Naive thymus-derived CD8-positive, alpha-beta T cell (primary cell): ENCODE measurements at regions of chr16 and their contacts with region 1.

Region 1: GRCh38 chr16:30378236-30379204 is 3.8 kb downstream of the SEPTIN1 start:
- DNase-seq: peak; percentile 76 to 100 (median 99)
- ATAC-seq: peak; percentile 74 to 79
- H3K4me3 Mint-ChIP-seq: peak overlapping the region; percentile 95 to 100 (median 98)
- H3K27ac Mint-ChIP-seq: peak overlapping the region; percentile 99 to 100 (median 100)
- H3K4me1 Mint-ChIP-seq: peaks cover 29 to 71% (median 68%) of the 10 kb centered on the region in 4 donors
- H3K27me3 Mint-ChIP-seq: no peaks in the 10 kb centered on the region

Region 2: DNA sequence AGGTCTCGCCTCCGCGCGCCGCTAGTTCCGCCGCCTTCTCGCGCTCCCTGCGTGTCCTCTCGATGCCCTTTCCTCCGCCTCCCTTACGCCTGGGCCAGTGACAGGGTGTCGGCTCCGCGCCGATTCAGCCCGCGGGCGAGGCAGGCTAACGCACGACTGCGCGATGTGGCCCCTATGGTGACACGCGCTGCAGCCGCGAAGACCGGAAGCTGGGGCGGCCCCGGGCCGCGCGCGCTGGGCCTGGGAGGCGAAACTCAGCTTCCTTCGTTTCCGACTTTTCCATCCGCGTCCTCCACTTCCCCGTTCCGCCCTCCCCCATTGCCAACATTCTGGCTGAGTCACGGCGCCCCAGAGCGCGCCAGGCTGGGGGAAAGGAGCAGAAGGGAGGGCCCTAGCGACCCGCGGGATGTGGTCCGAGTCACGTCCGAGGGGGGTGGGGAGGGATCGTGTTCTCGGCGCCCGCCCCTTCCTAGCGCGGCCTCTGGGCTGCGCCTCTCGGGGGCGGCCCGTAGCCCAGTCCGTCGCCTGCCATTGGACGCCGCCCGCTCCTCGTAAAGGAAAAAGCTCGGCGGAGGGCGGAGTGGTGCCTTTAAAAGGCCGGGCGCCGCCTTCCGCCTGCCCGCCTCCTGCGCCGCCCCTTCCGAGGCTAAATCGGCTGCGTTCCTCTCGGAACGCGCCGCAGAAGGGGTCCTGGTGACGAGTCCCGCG is 313.2 kb before region 1 on chr16 and contains the start of gene ALDOA:
- POLR2A ChIA-PET with region 1: interaction called, 15 read pairs
- DNase-seq: peak; percentile 89 to 96 (median 92)
- ATAC-seq: peak; percentile 81 to 87
- H3K4me3 Mint-ChIP-seq: peak within 1 kb of the TSS; percentile 98 to 100 (median 99)
- H3K27ac Mint-ChIP-seq: peak within 1 kb of the TSS; percentile 94 to 99 (median 97)
- H3K4me1 Mint-ChIP-seq: peaks cover 17 to 46% (median 43%) of the 10 kb centered on the region in 4 donors
- H3K27me3 Mint-ChIP-seq: no peaks in the 10 kb centered on the region
- polyA plus RNA-seq, gene ALDOA: 798 to 1,176 (median 994) TPM

Region 3: DNA sequence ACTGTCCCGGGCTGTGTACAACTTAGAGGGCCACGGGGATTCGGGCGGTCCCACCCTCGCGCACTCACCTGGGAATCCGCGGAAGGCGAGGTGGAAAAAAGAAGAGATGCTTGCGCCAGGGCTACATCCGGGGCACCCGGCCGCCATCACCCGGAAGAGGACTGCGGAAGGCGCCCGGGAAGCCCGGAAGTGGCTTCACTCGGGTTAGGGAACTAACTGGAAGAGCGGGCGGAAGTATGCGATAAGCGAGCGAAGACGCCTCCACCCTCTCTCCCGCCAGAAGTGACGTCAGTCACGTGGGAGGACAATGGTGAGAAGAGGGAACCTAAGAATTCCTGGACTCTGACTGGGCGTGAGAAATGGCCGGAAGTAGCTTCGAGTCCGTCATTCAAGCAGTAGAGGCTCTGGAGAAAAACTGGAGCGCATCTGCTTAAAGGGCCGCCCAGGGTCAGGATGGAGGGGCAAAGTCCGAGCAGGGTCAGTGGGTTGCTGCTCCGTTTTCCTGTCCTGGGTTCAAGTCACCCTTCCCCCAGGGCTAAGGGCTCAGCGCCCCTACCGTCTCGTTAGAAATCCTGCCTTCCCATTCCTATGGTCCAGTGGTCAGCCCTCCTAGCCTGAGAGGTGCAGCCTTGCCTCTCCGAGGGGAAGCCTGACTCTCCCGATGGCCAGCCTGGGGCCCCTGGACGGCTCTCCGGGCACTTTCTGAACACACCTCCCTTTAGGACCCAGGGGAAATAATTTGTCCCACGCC is 23.2 kb before region 1 on chr16 and contains the start of gene CD2BP2:
- POLR2A ChIA-PET with region 1: interaction called, 17 read pairs
- DNase-seq: peak; percentile 79 to 93 (median 84)
- ATAC-seq: peak; percentile 92 to 94
- H3K4me3 Mint-ChIP-seq: peak within 1 kb of the TSS; percentile 89 to 99 (median 95)
- H3K27ac Mint-ChIP-seq: peak within 1 kb of the TSS; percentile 95 to 99 (median 98)
- H3K4me1 Mint-ChIP-seq: peaks cover 22 to 47% (median 37%) of the 10 kb centered on the region in 4 donors
- H3K27me3 Mint-ChIP-seq: no peaks in the 10 kb centered on the region
- polyA plus RNA-seq, gene CD2BP2: 20.6 to 21.9 (median 21.7) TPM

Region 4: DNA sequence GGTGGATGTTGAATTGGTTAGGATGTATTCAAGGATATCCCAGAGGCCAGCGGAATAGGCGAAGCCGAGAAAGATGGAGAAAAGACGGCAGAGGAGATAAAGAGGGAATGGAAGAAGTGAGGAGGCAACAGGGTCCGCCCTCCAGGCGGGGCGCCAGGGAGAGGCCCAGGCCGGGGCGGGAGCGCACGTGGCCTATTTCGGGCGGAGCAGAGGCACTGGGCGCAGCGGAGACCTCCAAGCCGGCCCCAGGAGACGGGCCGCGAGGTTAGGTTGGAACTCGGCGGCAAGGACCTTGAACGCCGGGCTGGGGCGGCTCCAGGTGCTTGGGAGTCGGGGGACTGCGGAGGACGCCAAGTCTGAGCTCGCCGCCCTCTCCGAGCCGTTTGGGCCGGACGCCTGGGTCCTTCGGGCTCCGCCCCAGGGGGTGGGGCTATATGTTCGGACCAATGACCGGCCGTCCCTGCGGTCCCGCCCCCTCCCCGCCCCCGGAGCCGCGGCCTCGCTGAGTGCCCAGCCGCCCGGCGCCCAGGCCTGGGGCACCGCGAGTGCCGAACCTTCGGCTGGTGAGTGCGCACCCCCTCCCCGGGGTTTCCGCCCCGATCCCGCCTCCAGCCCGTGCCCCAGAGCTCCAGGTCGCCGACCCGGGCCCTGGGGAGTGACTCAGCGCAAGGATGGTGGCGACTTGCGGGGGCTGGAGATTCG is 28.7 kb after region 1 on chr16 and contains the start of gene ZNF771:
- POLR2A ChIA-PET with region 1: interaction called, 166 read pairs
- DNase-seq: peak; percentile 65 to 92 (median 80)
- ATAC-seq: peak; percentile 81 to 87
- H3K4me3 Mint-ChIP-seq: peak within 1 kb of the TSS; percentile 88 to 100 (median 97)
- H3K27ac Mint-ChIP-seq: peak within 1 kb of the TSS; percentile 82 to 96 (median 95)
- H3K4me1 Mint-ChIP-seq: peaks cover 18 to 36% (median 29%) of the 10 kb centered on the region in 4 donors
- H3K27me3 Mint-ChIP-seq: peaks cover 0 to 3% (median 0%) of the 10 kb centered on the region in 5 donors
- polyA plus RNA-seq, gene ZNF771: 2.1 to 6.7 (median 3.8) TPM

Region 5: DNA sequence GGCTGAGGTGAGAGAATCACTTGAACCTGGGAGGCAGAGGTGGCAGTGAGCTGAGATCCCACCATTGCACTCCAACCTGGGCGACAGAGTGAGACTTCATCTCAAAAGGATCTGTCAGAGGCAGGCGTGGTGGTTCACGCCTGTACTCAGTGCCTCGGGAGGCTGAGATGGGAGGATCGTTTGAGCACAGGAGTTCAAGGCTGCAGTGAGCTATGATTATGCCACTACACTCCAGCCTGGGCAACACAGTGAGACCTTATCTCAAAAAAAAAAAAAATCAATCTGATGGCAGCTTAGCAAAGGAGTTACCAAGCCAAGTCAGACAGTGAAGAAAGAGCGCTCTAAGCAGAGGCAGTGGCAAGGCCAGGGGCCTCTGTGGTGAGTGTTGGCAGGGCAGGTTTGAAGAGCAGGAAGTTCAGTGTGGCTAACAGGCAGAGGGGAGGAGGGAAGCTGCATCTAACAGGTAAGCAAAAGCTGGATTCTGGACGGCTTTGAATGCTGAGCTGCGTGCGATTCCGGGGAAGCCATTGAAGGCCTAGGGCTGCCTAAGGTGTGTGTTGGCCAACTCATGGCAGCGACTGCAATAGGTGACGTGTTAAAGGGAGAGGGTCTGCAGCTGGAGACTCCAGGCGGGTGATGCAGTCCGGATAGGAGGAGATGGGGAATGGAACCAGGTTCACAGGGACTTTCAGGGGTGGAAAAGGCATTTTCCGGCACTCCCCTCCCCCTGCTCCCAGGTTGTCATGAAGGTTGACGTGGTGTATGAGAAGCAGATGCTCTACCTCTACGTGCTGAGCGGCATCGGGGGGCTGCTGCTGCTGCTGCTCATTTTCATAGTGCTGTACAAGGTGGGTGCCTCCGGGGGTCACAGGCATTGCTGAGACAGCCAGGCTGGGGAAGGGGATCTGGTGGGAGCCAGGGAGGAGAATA is 140.9 kb after region 1 on chr16:
- POLR2A ChIA-PET with region 1: interaction called, 10 read pairs
- DNase-seq: peak in 4 of 10 donors; percentile 25 to 50 (median 43)
- ATAC-seq: peak; percentile 63 to 91
- H3K4me3 Mint-ChIP-seq: peak overlapping the region in 7 of 10 donors; percentile 4 to 59 (median 24)
- H3K27ac Mint-ChIP-seq: peak overlapping the region; percentile 45 to 92 (median 84)
- H3K4me1 Mint-ChIP-seq: peaks cover 16 to 35% (median 27%) of the 10 kb centered on the region in 4 donors
- H3K27me3 Mint-ChIP-seq: no peaks in the 10 kb centered on the region

Region 6: GRCh38 chr16:30604316-30604947 is 225.9 kb after region 1 on chr16:
- POLR2A ChIA-PET with region 1: no interaction called
- DNase-seq: no peak
- ATAC-seq: no peak
- H3K4me3 Mint-ChIP-seq: no peak overlapping the region
- H3K27ac Mint-ChIP-seq: no peak overlapping the region
- H3K4me1 Mint-ChIP-seq: peaks cover 2 to 28% (median 20%) of the 10 kb centered on the region in 4 donors
- H3K27me3 Mint-ChIP-seq: no peaks in the 10 kb centered on the region